Activated T-helper 2 cell treated with anti-CD3 and anti-CD28 coated beads, Interferon-gamma antibody, Interleukin-2, Interleukin-4, amounts not matched to agents 10 μg/mL and 5 μg/mL and 100 μg/mL, durations not matched to agents 14 hours and 24 hours and 36 hours (primary cell): ENCODE measurements at regions of chr2 and their contacts with region 1.

Region 1: DNA sequence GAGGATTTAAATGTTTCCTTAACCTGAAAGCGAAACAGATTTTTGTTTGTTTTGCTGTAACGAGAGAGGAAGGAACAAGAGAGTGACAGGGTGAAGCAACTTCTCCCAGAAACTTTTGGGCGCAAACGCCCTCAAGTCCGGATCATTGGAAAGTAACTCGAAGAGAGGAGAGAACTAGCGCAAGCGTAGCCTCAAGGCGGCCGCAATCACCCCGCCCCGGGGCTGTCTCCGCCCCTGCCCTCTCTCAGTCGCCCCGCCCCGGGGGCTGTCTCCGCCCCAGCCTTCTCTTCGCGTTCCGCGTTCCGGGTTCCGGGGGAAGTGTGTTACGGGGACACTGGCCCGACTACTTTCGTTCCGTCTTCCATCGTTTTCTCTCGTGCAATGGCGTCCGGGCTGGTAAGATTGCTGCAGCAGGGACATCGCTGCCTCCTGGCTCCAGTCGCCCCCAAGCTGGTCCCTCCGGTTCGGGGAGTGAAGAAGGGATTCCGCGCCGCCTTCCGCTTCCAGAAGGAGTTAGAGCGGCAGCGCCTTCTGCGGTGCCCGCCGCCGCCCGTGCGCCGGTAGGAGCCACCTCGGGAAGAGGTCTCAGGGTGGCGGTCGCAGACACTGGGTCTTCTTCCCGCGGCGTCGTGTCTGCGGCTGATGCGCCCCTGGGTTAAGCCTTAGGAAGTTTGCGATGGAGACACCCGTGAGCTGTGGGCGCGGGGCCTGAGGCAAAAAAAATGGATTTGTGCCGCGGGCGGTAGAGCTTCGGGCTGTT is at the start of gene MRPL44:
- DNase-seq: peak; percentile 96
- H3K4me3 Mint-ChIP-seq: peak within 1 kb of the TSS; percentile 89
- H3K27ac Mint-ChIP-seq: peak within 1 kb of the TSS; percentile 87
- H3K4me1 Mint-ChIP-seq: peaks cover 71% of the 10 kb centered on the region
- H3K27me3 Mint-ChIP-seq: no peaks in the 10 kb centered on the region
- total RNA-seq, gene MRPL44: 33.6 and 34.3 TPM in 2 replicates

Region 2: GRCh38 chr2:223760838-223761502 is 196.3 kb before region 1 on chr2:
- intact Hi-C with region 1: loop called (anchors 1 kb)
- DNase-seq: peak; percentile 68
- H3K4me3 Mint-ChIP-seq: peak overlapping the region; percentile 61
- H3K27ac Mint-ChIP-seq: peak overlapping the region; percentile 92
- H3K4me1 Mint-ChIP-seq: peaks cover 40% of the 10 kb centered on the region
- H3K27me3 Mint-ChIP-seq: no peaks in the 10 kb centered on the region

Region 3: GRCh38 chr2:223944703-223945531 is 12.4 kb before region 1 on chr2 and contains the start of gene WDFY1:
- intact Hi-C with region 1: loop called (anchors 1 kb)
- DNase-seq: peak; percentile 71
- H3K4me3 Mint-ChIP-seq: peak within 1 kb of the TSS; percentile 89
- H3K27ac Mint-ChIP-seq: peak within 1 kb of the TSS; percentile 85
- H3K4me1 Mint-ChIP-seq: peaks cover 48% of the 10 kb centered on the region
- H3K27me3 Mint-ChIP-seq: no peaks in the 10 kb centered on the region
- total RNA-seq, gene WDFY1: 22.2 and 23.3 TPM in 2 replicates

Region 4: GRCh38 chr2:224585205-224586088 is 628.2 kb after region 1 on chr2 and contains the start of gene CUL3:
- intact Hi-C with region 1: loop called (anchors 1 kb)
- DNase-seq: peak; percentile 98
- H3K4me3 Mint-ChIP-seq: peak within 1 kb of the TSS; percentile 98
- H3K27ac Mint-ChIP-seq: peak within 1 kb of the TSS; percentile 90
- H3K4me1 Mint-ChIP-seq: peaks cover 42% of the 10 kb centered on the region
- H3K27me3 Mint-ChIP-seq: no peaks in the 10 kb centered on the region
- total RNA-seq, gene CUL3: 79.6 and 89.8 TPM in 2 replicates

Region 5: DNA sequence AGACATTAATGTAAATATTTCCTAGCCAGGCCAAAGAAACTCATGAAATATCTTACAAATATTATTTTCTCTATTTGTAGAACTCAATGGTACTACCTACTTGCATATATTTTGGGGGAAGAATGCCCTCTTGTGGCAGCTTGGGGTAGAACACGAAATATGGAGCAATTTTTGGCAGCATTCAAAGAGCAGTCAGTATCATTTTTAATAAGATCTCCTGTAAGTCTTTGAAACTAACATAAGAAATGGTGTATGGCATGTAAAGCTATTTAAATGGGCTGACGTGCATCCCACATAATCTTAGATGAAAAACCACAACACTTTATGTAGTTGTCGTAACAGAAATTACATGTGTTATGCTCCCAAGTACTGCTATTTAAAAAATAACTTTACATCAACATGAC is 821.2 kb after region 1 on chr2:
- intact Hi-C with region 1: no loop called
- DNase-seq: peak; percentile 39
- H3K4me3 Mint-ChIP-seq: no peak overlapping the region
- H3K27ac Mint-ChIP-seq: no peak overlapping the region
- H3K4me1 Mint-ChIP-seq: no peaks in the 10 kb centered on the region
- H3K27me3 Mint-ChIP-seq: no peaks in the 10 kb centered on the region